Ascending aorta (tissue), 2 donors: ENCODE measurements at regions of chr6 and their contacts with region 1.

Region 1: DNA sequence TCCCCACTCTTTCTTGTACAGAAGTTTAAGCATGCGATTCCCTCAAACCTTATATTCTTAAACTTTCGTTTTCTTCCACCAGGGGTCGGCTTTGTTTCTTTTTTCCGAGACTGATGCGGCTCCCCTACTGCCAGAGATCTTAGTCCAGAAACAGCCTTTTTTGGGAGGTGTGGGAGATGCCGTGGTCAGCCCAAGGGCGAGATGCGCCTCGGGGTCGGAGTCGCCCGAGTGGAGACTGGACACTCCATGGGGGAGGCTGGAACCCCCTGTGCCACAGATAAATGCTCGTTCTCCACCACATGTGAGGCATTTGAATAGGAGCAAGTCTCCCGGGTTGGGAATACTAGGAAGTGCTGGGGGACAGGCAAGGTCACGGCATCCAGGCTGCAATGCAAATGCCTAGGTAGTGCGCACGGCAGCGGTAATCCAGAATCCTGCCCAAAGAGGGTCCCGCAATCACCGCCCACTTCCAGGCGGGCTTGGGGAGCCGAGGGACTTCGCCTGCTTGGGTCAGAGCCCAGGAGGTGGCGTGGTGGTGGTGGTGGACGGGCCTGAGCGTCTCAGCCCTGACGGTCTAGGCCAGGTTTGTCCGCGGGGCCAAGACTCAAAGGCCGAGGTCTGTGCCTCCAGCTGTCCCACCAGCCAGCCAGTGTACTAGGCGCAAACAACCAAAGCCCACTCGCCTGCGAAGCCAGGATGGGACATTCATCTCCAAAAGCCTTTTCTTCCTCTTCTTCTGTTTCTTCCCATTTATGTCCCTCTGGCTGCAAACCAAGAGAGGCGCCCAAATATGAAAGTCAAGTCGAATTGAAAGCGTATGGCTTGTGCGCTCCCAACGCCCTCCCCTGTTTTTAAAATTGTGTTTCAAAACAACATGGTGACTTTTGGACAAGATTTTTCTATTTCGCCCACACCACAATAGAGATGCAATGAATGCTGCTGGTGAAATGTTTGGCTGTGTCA is 39.3 kb upstream of the OSTM1 start:
- DNase-seq: no peak
- H3K4me3 ChIP-seq: peak overlapping the region; percentile 35 to 61
- H3K27ac ChIP-seq: no peak overlapping the region
- H3K4me1 ChIP-seq: peaks cover 0 to 17% of the 10 kb centered on the region in 2 donors
- H3K27me3 ChIP-seq: peaks cover 7% of the 10 kb centered on the region
- CTCF ChIP-seq: peak; percentile 40 to 71 (median 41)

Region 2: DNA sequence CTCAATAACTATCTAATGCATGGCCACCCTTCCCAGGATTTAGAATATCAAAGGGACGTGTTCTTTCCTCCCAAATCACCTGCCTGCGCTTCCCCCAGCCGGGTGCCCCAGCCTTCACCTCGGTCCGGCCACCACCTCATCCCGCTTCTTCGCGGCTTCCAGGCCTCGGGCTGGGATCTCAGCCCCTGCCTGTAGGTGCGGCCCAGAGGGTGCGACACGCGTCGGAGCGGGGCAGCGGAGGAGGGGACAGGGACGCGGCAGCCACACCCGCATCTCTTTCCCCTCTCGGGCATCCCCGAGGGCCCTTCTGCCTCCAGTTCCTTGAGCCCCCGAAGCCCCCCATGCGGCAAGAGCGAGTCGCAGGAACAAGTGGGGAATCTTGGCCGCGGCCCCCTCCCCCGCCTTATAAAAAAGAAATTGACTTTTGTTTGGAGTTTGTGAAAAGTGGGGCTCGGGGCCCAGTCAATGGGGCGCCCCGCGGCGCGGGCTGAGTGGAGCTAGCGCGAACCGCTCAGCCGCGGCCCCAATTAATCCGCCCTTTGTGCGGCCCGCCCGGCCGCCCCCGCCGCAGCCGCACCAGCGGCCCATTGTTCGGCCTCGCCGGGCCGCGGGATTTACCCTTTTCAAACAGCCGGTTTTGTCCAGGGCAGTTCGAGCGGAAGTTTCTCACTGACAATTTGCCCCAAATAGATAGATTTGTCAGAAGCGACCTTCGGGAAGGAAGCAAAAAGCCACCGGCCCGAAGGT is 43.6 kb after region 1 on chr6:
- intact Hi-C with region 1: loop called (anchors 5 kb)
- DNase-seq: peak in 1 of 2 donors; percentile 62
- H3K4me3 ChIP-seq: peak overlapping the region; percentile 41 to 44
- H3K27ac ChIP-seq: no peak overlapping the region
- H3K4me1 ChIP-seq: peaks cover 4 to 10% of the 10 kb centered on the region in 2 donors
- H3K27me3 ChIP-seq: peaks cover 23% of the 10 kb centered on the region
- CTCF ChIP-seq: no peak

Region 3: GRCh38 chr6:108200631-108201030 is 86.8 kb after region 1 on chr6:
- intact Hi-C with region 1: no loop called
- DNase-seq: no peak
- H3K4me3 ChIP-seq: no peak overlapping the region
- H3K27ac ChIP-seq: no peak overlapping the region
- H3K4me1 ChIP-seq: no peaks in the 10 kb centered on the region
- H3K27me3 ChIP-seq: no peaks in the 10 kb centered on the region
- CTCF ChIP-seq: no peak

Region 4: DNA sequence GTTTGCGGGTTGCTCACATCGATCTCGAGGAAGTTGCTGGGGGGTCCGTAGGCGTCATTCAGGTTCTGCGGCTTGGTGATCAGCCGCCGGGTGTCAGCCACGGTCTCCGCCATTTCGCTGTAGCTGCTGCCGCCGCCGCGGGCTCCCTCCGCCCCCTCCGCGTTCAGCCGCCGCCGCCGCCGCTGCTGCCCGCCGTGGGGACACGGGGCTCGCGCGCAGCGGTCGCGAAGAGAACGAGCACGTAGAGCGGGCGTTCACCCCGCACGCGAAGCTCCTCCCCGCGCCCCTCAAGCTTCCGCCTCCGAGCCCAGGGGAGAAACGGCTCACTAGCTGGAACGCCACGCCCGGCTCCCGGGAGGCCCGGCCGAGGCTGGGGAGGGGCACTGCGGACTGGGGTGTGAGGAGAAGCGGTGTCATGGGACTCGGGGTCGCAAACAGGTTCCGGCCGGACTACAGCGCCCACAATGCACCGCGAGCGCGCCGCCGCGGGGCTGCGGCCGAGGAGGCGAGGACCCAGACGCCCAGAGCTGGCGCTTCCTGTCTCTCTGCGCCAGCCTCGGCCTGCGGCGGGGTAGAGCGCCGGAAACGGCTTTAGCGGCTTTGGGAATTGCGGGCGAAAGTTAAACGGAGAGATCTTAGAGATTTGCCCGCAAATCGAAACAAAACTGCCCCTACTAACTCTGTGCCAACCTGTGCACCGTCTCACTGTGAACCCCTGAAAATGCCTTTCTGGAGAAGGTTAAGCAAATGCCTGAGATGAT is 147.2 kb after region 1 on chr6 and contains the start of gene SNX3:
- intact Hi-C with region 1: loop called (anchors 10 kb)
- DNase-seq: peak; percentile 91 to 98
- H3K4me3 ChIP-seq: peak within 1 kb of the TSS; percentile 88 to 91
- H3K27ac ChIP-seq: peak within 1 kb of the TSS; percentile 93 to 95
- H3K4me1 ChIP-seq: peaks cover 0 to 12% of the 10 kb centered on the region in 2 donors
- H3K27me3 ChIP-seq: no peaks in the 10 kb centered on the region
- CTCF ChIP-seq: no peak
- total RNA-seq, gene SNX3: 112 TPM

Region 5: GRCh38 chr6:108312605-108313004 is 198.8 kb after region 1 on chr6:
- intact Hi-C with region 1: no loop called
- DNase-seq: no peak
- H3K4me3 ChIP-seq: no peak overlapping the region
- H3K27ac ChIP-seq: no peak overlapping the region
- H3K4me1 ChIP-seq: no peaks in the 10 kb centered on the region
- H3K27me3 ChIP-seq: no peaks in the 10 kb centered on the region
- CTCF ChIP-seq: no peak

Region 6: GRCh38 chr6:108484016-108484415 is 370.2 kb after region 1 on chr6:
- intact Hi-C with region 1: loop called (anchors 10 kb)
- DNase-seq: no peak
- H3K4me3 ChIP-seq: no peak overlapping the region
- H3K27ac ChIP-seq: no peak overlapping the region
- H3K4me1 ChIP-seq: no peaks in the 10 kb centered on the region
- H3K27me3 ChIP-seq: no peaks in the 10 kb centered on the region
- CTCF ChIP-seq: no peak

Region 7: GRCh38 chr6:108526739-108527174 is 412.9 kb after region 1 on chr6:
- intact Hi-C with region 1: loop called (anchors 1 kb)
- DNase-seq: no peak
- H3K4me3 ChIP-seq: no peak overlapping the region
- H3K27ac ChIP-seq: no peak overlapping the region
- H3K4me1 ChIP-seq: no peaks in the 10 kb centered on the region
- H3K27me3 ChIP-seq: no peaks in the 10 kb centered on the region
- CTCF ChIP-seq: peak; percentile 63 to 84 (median 82)

Region 8: GRCh38 chr6:109036574-109037294 is 922.9 kb after region 1 on chr6:
- intact Hi-C with region 1: no loop called
- DNase-seq: no peak
- H3K4me3 ChIP-seq: no peak overlapping the region
- H3K27ac ChIP-seq: no peak overlapping the region
- H3K4me1 ChIP-seq: no peaks in the 10 kb centered on the region
- H3K27me3 ChIP-seq: no peaks in the 10 kb centered on the region
- CTCF ChIP-seq: no peak